ENCODE measurements at regions of chr5 and their contacts with region 1.

Region 1: GRCh38 chr5:172006321-172007174 is at the start of gene FBXW11:
- DNase-seq: peak; percentile 97
- H3K4me3 Mint-ChIP-seq: peak within 1 kb of the TSS; percentile 93
- H3K27ac Mint-ChIP-seq: peak within 1 kb of the TSS; percentile 92
- H3K4me1 Mint-ChIP-seq: peaks cover 53% of the 10 kb centered on the region
- H3K27me3 Mint-ChIP-seq: no peaks in the 10 kb centered on the region
- total RNA-seq, gene FBXW11: 47.2 to 47.4 TPM

Region 2: DNA sequence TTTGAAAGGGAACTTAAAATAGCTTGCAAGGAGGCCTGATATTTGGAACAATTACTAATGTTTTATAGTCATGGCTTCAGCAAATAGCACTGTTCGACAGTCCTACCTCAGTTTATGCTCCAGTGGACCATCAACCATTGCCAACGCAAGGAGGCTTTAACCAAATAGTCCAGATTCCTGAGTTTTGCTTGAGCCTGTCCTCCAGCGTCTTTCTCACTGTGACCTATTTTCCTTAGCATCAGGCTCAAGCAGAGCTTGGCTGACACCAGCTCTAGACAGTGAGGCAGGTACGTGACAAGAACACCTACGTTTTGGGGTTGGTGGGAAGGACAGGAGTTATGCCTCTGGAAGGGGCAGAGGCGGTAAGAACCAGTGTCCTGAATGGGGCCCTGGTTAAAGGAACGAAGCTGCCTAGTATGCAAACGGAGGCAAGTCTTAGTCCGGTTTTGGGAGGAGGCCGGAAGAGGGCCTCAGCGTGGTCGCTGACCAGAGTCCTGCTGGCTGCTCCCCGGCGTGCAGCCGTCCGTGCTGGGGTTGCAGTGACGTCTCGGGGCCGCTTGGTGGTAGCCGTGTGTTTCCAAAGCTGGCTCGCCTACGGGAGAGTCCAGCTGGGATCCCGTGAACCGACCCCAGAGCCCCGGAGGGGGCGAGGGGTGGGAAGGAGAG is 588.1 kb before region 1 on chr5:
- CTCF ChIA-PET with region 1: interaction called, 10 read pairs
- POLR2A ChIA-PET with region 1: interaction called, 3 read pairs
- intact Hi-C with region 1: no loop called
- DNase-seq: peak; percentile 74
- H3K4me3 Mint-ChIP-seq: peak overlapping the region; percentile 52
- H3K27ac Mint-ChIP-seq: no peak overlapping the region
- H3K4me1 Mint-ChIP-seq: peaks cover 12% of the 10 kb centered on the region
- H3K27me3 Mint-ChIP-seq: peaks cover 14% of the 10 kb centered on the region

Region 3: GRCh38 chr5:171826132-171826531 is 180.4 kb before region 1 on chr5:
- CTCF ChIA-PET with region 1: no interaction called
- POLR2A ChIA-PET with region 1: no interaction called
- intact Hi-C with region 1: no loop called
- DNase-seq: no peak
- H3K4me3 Mint-ChIP-seq: no peak overlapping the region
- H3K27ac Mint-ChIP-seq: no peak overlapping the region
- H3K4me1 Mint-ChIP-seq: no peaks in the 10 kb centered on the region
- H3K27me3 Mint-ChIP-seq: no peaks in the 10 kb centered on the region

Region 4: GRCh38 chr5:171897231-171897630 is 109.3 kb before region 1 on chr5:
- CTCF ChIA-PET with region 1: no interaction called
- POLR2A ChIA-PET with region 1: no interaction called
- intact Hi-C with region 1: no loop called
- DNase-seq: peak; percentile 21
- H3K4me3 Mint-ChIP-seq: no peak overlapping the region
- H3K27ac Mint-ChIP-seq: no peak overlapping the region
- H3K4me1 Mint-ChIP-seq: peaks cover 20% of the 10 kb centered on the region
- H3K27me3 Mint-ChIP-seq: no peaks in the 10 kb centered on the region

Region 5: DNA sequence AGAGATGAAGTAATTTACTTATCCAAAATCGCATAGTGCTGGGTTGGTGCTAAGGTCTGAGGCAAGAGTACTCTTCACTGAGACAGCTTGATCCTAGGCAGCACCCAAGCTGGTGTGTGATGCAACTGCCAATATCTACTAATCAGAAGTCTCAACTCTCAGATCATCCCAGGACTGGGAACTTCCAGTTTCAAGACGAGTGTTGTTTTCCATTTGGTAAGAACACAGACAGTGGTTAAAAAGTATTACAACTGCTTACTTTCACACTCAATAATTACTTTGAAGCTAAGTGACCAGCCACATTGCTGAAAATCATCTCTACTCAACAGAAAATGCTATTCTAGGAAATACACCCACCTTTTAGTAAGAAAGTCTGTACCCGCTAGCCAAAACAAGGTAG is 45.4 kb before region 1 on chr5:
- CTCF ChIA-PET with region 1: interaction called, 4 read pairs
- POLR2A ChIA-PET with region 1: interaction called, 25 read pairs
- intact Hi-C with region 1: loop called (anchors 1 kb)
- DNase-seq: peak; percentile 59
- H3K4me3 Mint-ChIP-seq: no peak overlapping the region
- H3K27ac Mint-ChIP-seq: peak overlapping the region; percentile 53
- H3K4me1 Mint-ChIP-seq: peaks cover 87% of the 10 kb centered on the region
- H3K27me3 Mint-ChIP-seq: no peaks in the 10 kb centered on the region

Region 6: DNA sequence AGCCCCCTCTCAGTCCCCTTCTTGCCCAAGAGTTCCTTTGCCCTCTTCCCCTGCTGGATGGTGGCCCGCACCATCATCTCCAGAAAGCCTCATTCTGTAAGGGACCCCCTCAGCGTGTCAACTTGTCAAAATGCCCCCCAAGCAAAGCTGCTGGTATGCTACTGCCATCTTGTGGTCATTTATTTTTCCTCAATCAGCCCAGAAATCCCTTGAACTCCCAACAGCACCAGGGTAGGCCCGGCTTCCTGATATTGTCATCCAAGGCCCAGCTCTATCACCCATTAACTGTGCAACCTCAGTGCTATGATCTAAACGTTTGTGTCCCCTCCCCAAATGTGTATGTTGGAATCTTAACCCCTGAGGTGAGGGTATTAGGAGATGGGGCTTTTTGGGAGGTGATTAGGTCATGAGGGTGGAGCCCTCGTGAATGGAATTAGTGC is 53.1 kb after region 1 on chr5:
- CTCF ChIA-PET with region 1: interaction called, 13 read pairs
- POLR2A ChIA-PET with region 1: interaction called, 3 read pairs
- intact Hi-C with region 1: no loop called
- DNase-seq: no peak
- H3K4me3 Mint-ChIP-seq: no peak overlapping the region
- H3K27ac Mint-ChIP-seq: no peak overlapping the region
- H3K4me1 Mint-ChIP-seq: peaks cover 4% of the 10 kb centered on the region
- H3K27me3 Mint-ChIP-seq: no peaks in the 10 kb centered on the region

Region 7: DNA sequence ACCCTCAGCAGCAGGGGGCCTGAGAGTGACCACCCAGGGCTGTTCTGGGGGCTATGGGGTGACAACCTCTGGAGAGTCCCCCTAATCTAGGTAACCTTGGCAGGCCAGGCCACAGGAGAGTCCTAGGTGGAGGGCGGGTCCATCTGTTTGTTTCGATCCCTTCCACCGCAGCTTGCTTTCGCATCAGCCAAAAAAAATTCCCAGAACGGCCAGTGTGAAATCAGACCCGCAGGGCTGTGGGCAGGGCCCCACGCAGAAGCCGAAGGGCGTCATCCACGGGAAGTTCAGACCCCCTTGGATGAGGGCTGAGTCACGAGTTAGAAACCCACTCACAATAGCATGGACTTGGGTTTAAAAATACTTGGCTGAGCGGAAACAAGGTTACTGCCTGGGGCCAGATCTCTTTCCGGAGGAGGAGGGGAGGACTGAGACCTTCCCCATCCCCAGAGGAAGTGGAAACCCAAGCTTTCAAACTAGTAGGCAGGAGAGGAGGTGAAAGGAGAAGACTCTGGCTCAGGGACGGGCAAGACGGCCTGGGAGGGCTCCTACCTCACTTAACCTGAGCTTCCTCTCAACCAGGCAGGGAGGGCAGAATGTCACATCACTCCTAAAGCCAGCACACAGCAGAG is 172.9 kb after region 1 on chr5:
- CTCF ChIA-PET with region 1: no interaction called
- POLR2A ChIA-PET with region 1: interaction called, 11 read pairs
- intact Hi-C with region 1: no loop called
- DNase-seq: peak; percentile 67
- H3K4me3 Mint-ChIP-seq: peak overlapping the region; percentile 73
- H3K27ac Mint-ChIP-seq: peak overlapping the region; percentile 99
- H3K4me1 Mint-ChIP-seq: peaks cover 88% of the 10 kb centered on the region
- H3K27me3 Mint-ChIP-seq: no peaks in the 10 kb centered on the region

Region 8: GRCh38 chr5:172770675-172771438 is 764.3 kb after region 1 on chr5 and contains the start of gene DUSP1:
- CTCF ChIA-PET with region 1: no interaction called
- POLR2A ChIA-PET with region 1: no interaction called
- intact Hi-C with region 1: loop called (anchors 10 kb)
- DNase-seq: peak; percentile 97
- H3K4me3 Mint-ChIP-seq: peak within 1 kb of the TSS; percentile 89
- H3K27ac Mint-ChIP-seq: peak within 1 kb of the TSS; percentile 92
- H3K4me1 Mint-ChIP-seq: peaks cover 65% of the 10 kb centered on the region
- H3K27me3 Mint-ChIP-seq: no peaks in the 10 kb centered on the region
- total RNA-seq, gene DUSP1: 10.6 to 10.7 TPM

Measured in activated CD4-positive, alpha-beta memory T cell treated with anti-CD3 and anti-CD28 coated beads for 36 hours (primary cell).